ENCODE measurements at regions of chr20 and their contacts with region 1.

Region 1: GRCh38 chr20:43408848-43409576 is 48.7 kb upstream of the SRSF6 start:
- DNase-seq: peak; percentile 25 to 57 (median 32)
- ATAC-seq: peak; percentile 74
- H3K4me3 ChIP-seq: no peak overlapping the region
- H3K27ac ChIP-seq: no peak overlapping the region
- H3K4me1 ChIP-seq: no peaks in the 10 kb centered on the region
- H3K27me3 ChIP-seq: no peaks in the 10 kb centered on the region
- CTCF ChIP-seq: peak; percentile 65 to 81 (median 78)
- EP300 ChIP-seq: no peak
- POLR2A ChIP-seq: no peak
- RAD21 ChIP-seq: peak; percentile 33 to 83; a peak in 2 of 4 replicates

Region 2: GRCh38 chr20:43205699-43206098 is 203.3 kb before region 1 on chr20:
- CTCF ChIA-PET with region 1: interaction called, 7 read pairs
- POLR2A ChIA-PET with region 1: no interaction called
- in situ Hi-C with region 1: no loop called
- intact Hi-C with region 1: loop called (anchors 10 kb)
- DNase-seq: peak in 2 of 4 experiments; percentile 14 to 18
- ATAC-seq: no peak
- H3K4me3 ChIP-seq: no peak overlapping the region
- H3K27ac ChIP-seq: no peak overlapping the region
- H3K4me1 ChIP-seq: no peaks in the 10 kb centered on the region
- H3K27me3 ChIP-seq: peaks cover 4% of the 10 kb centered on the region in 2 experiments; a peak in 2 of 5 replicates
- CTCF ChIP-seq: peak in 2 of 3 experiments; percentile 3 to 10; a peak in 1 of 6 replicates
- EP300 ChIP-seq: no peak
- POLR2A ChIP-seq: no peak
- RAD21 ChIP-seq: no peak

Region 3: DNA sequence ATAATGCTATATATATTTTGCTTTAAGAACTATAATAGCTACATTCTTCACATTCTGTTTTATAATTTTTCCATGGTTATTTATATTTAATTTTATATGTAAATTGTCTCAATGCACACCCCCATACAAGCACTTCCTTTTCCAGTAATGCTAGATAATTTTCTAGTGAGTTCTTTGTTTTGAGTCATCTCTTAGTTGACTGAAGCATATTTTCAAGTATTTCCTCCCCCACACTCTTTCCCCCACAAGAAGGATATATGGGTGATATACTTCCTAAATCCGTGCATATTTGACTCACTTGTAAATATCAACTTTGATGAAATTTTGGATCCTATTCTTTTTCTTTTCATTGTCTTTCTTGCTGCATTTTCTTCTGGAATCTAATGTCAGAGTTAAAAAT is 33.4 kb before region 1 on chr20:
- CTCF ChIA-PET with region 1: no interaction called
- POLR2A ChIA-PET with region 1: no interaction called
- in situ Hi-C with region 1: no loop called
- intact Hi-C with region 1: no loop called
- DNase-seq: no peak
- ATAC-seq: no peak
- H3K4me3 ChIP-seq: no peak overlapping the region
- H3K27ac ChIP-seq: no peak overlapping the region
- H3K4me1 ChIP-seq: no peaks in the 10 kb centered on the region
- H3K27me3 ChIP-seq: 0 out of 5 replicates have a peak, but pooled peaks cover 0 to 2% of the 10 kb centered on the region in 2 experiments
- CTCF ChIP-seq: no peak
- EP300 ChIP-seq: no peak
- POLR2A ChIP-seq: no peak
- RAD21 ChIP-seq: no peak

Measured in K562 (cell line).